Activated T-helper 1 cell treated with anti-CD3 and anti-CD28 coated beads, Interleukin-12 subunit alpha, Interleukin-12 subunit beta, Interleukin-2, Interleukin-4 antibody, amounts not matched to agents 30 ng/mL and 10 ng/mL and 1 ng/mL, durations not matched to agents 14 hours and 24 hours and 36 hours (primary cell): ENCODE measurements at regions of chr2 and their contacts with region 1.

Region 1: DNA sequence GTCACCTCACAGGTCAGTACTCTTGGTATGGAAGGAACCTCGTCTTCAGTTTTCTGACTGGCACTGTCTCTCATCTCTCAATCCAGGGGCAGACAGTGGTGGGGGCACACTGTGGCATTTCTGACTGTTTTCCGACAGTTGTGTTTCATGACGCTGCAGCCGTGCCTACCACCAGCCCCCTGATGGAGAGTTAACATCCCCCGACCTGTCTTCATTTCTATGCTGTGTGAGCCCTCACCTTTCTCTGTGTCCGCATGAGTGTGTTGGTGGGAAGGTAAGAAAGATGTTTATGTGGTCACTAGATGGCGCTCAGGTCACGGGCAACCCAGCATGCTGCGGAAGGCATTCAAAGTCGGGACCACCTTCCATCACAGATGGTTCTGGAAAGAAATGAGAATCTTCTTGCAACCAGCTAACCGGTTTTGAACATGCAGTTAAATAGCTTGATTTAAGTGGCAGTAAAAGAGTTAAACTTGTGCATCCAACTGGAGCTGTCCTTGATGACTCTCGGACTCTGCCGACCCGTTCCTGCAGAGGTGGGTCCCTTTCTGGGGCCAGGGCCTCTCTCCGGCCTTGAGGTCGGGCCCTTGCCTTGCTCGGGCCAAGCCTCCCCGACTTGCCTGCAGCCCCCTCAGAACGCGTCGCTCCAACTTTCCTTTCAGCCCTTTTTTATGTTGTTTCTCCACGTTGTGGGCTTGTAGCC is 92.4 kb downstream of the DYSF start:
- DNase-seq: peak; percentile 8
- H3K4me3 Mint-ChIP-seq: peak overlapping the region; percentile 24
- H3K27ac Mint-ChIP-seq: no peak overlapping the region
- H3K4me1 Mint-ChIP-seq: peaks cover 4% of the 10 kb centered on the region
- H3K27me3 Mint-ChIP-seq: peaks cover 15% of the 10 kb centered on the region

Region 2: GRCh38 chr2:71798266-71799012 is 252.7 kb after region 1 on chr2:
- intact Hi-C with region 1: loop called (anchors 1 kb)
- DNase-seq: no peak
- H3K4me3 Mint-ChIP-seq: no peak overlapping the region
- H3K27ac Mint-ChIP-seq: no peak overlapping the region
- H3K4me1 Mint-ChIP-seq: no peaks in the 10 kb centered on the region
- H3K27me3 Mint-ChIP-seq: no peaks in the 10 kb centered on the region

Region 3: DNA sequence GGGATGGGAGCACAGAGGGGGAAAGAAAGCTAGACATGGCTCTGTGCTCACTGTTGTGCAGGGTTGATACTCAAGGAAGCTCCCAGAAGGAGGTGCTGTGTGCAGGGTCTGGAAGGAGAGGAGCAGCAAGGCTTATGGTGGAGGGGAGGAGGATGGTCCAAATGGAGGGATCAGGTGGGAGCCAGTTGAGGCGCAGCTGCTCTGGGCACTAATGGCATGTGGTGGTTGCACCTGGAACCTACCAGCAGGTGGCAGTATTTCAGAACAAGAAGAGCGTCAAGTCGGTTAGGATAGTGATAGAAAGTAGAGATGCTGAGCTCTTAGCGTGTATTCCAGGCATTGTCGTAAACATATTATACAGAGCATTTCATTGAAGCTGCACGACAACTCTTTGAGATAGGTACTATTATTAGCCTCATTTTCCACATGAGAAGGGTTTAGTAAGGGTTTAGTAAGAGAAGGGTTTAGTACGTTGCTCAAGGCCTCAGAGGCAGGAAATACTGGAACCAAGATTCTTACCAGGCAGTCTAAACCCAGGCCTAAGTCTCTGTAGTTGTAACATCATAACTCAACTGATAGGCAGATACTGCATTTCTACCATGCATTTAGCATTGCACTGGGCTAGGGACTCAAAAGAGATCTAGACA is 378.3 kb after region 1 on chr2:
- intact Hi-C with region 1: loop called (anchors 1 kb)
- DNase-seq: peak; percentile 17
- H3K4me3 Mint-ChIP-seq: no peak overlapping the region
- H3K27ac Mint-ChIP-seq: no peak overlapping the region
- H3K4me1 Mint-ChIP-seq: no peaks in the 10 kb centered on the region
- H3K27me3 Mint-ChIP-seq: no peaks in the 10 kb centered on the region

Region 4: DNA sequence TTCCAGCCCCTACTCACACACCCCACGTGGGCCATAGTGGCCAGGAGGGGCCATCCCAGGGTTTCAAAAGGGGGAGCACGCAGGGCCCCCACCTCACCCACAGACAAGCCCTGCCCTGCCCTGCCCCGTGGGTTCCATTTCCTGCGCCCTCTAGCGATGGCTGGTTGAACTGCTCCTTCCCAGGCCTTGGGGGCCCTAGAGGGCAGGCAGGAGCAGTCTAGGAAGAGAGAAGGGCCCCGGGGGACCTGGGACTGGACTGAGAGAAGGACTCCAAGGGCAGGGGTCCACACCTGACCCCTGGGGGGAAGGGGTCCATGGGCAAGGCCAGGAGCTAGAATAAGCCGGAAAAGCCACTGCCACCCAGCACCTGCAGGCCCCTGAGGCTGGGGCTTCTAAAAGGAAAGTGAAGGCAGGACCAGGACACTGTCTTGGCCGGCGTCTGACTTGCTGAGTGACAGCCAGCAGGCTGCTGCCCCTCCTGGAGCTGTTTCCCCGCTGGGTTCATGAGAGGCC is 591.8 kb after region 1 on chr2:
- intact Hi-C with region 1: loop called (anchors 2 kb)
- DNase-seq: peak; percentile 31
- H3K4me3 Mint-ChIP-seq: no peak overlapping the region
- H3K27ac Mint-ChIP-seq: no peak overlapping the region
- H3K4me1 Mint-ChIP-seq: no peaks in the 10 kb centered on the region
- H3K27me3 Mint-ChIP-seq: peaks cover 8% of the 10 kb centered on the region

Region 5: DNA sequence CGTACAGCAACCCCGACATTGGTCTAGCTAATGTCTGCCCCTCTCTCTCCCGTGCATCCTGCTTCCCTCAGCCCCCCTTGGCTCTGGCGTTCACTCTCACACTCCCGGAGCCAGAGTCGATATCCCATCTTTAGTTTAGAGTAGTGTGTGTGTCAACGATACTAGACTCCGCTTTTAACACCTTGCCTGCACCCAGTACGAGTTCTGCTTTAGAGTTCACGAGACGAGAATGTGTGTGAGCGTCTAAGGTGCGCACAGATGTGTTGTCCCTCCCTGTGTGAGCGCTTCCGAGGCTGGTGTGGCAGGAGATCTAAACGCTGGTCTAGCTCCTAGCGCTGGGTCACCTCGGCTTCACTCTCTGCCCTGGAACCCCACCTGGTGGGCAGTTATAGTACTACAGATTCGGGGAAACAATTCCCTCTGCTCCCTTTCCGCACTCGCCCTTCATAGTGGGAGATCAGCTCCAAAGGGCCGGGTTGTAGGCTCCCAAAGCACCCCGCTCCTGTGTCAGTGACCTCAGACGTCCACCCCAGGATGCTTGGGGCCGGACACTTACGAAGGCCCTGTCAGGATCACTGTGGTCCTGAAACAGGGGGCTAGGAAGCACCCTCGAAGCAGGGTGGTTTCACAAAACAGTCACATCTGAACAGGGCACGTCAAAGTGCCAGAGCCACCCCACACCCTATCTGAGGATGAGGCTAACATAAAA is 604.6 kb after region 1 on chr2:
- intact Hi-C with region 1: loop called (anchors 1 kb)
- DNase-seq: peak; percentile 49
- H3K4me3 Mint-ChIP-seq: peak overlapping the region; percentile 32
- H3K27ac Mint-ChIP-seq: peak overlapping the region; percentile 71
- H3K4me1 Mint-ChIP-seq: peaks cover 21% of the 10 kb centered on the region
- H3K27me3 Mint-ChIP-seq: peaks cover 43% of the 10 kb centered on the region

Region 6: GRCh38 chr2:72579591-72580180 is 1034.0 kb after region 1 on chr2:
- intact Hi-C with region 1: loop called (anchors 2 kb)
- DNase-seq: no peak
- H3K4me3 Mint-ChIP-seq: no peak overlapping the region
- H3K27ac Mint-ChIP-seq: no peak overlapping the region
- H3K4me1 Mint-ChIP-seq: no peaks in the 10 kb centered on the region
- H3K27me3 Mint-ChIP-seq: no peaks in the 10 kb centered on the region

Region 7: GRCh38 chr2:72745679-72746368 is 1200.1 kb after region 1 on chr2:
- intact Hi-C with region 1: loop called (anchors 5 kb)
- DNase-seq: no peak
- H3K4me3 Mint-ChIP-seq: no peak overlapping the region
- H3K27ac Mint-ChIP-seq: no peak overlapping the region
- H3K4me1 Mint-ChIP-seq: no peaks in the 10 kb centered on the region
- H3K27me3 Mint-ChIP-seq: no peaks in the 10 kb centered on the region